Mammary epithelial cell (primary cell): ENCODE measurements at regions of chr3 and their contacts with region 1.

Region 1: GRCh38 chr3:179848711-179849110 is 188.0 kb downstream of the PEX5L start:
- DNase-seq: no peak
- H3K4me3 ChIP-seq: no peak overlapping the region
- H3K27ac ChIP-seq: no peak overlapping the region
- H3K4me1 ChIP-seq: no peaks in the 10 kb centered on the region
- H3K27me3 ChIP-seq: no peaks in the 10 kb centered on the region
- CTCF ChIP-seq: no peak

Region 2: GRCh38 chr3:179288845-179289244 is 559.9 kb before region 1 on chr3:
- CTCF ChIA-PET with region 1: no interaction called
- dilution Hi-C with region 1: no loop called
- in situ Hi-C with region 1: no loop called
- intact Hi-C with region 1: no loop called
- DNase-seq: no peak
- H3K4me3 ChIP-seq: no peak overlapping the region
- H3K27ac ChIP-seq: no peak overlapping the region
- H3K4me1 ChIP-seq: no peaks in the 10 kb centered on the region
- H3K27me3 ChIP-seq: peaks cover 6% of the 10 kb centered on the region
- CTCF ChIP-seq: no peak

Region 3: GRCh38 chr3:179921500-179921899 is 72.8 kb after region 1 on chr3:
- CTCF ChIA-PET with region 1: no interaction called
- dilution Hi-C with region 1: no loop called
- in situ Hi-C with region 1: no loop called
- intact Hi-C with region 1: loop called (anchors 5 kb)
- DNase-seq: no peak
- H3K4me3 ChIP-seq: no peak overlapping the region
- H3K27ac ChIP-seq: no peak overlapping the region
- H3K4me1 ChIP-seq: no peaks in the 10 kb centered on the region
- H3K27me3 ChIP-seq: no peaks in the 10 kb centered on the region
- CTCF ChIP-seq: no peak